ENCODE measurements at regions of chr12 and their contacts with region 1.

Region 1: GRCh38 chr12:106955377-106956047 is at the start of gene TMEM263:
- DNase-seq: peak; percentile 94
- ATAC-seq: peak; percentile 96
- total RNA-seq, gene TMEM263: 35.8 TPM

Region 2: GRCh38 chr12:106986625-106987430 is 31.3 kb after region 1 on chr12 and contains the start of gene MTERF2:
- intact Hi-C with region 1: loop called (anchors 1 kb)
- DNase-seq: peak; percentile 95
- ATAC-seq: peak; percentile 99
- total RNA-seq, gene MTERF2: 33.1 TPM

Region 3: DNA sequence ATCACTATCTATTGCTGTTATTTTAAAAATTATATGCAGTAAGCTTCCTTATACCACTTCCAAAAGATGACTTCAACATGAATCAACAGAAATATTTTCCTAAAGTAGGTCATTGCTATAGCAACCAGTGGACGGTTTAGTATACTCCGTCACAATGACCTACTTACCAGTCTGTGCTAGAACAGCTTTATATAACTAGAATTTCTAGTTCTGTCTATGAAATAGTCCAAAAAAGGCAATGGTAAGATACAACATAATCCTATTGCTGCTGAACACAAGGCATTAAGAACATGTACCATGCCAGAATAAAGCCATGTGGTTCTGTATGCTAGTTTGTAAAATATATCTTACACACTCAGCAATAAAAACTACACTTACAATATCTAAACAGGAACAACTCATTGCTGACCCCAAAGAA is 72.1 kb after region 1 on chr12:
- intact Hi-C with region 1: loop called (anchors 2 kb)
- DNase-seq: no peak
- ATAC-seq: peak; percentile 95